Adrenal gland (tissue), 19 donors: ENCODE measurements at regions of chr12 and their contacts with region 1.

Region 1: GRCh38 chr12:27652174-27652763 is 44.0 kb upstream of the REP15 start:
- DNase-seq: peak; percentile 38 to 77 (median 76)
- H3K4me3 ChIP-seq: no peak overlapping the region
- H3K27ac ChIP-seq: no peak overlapping the region
- H3K4me1 ChIP-seq: no peaks in the 10 kb centered on the region
- H3K27me3 ChIP-seq: no peaks in the 10 kb centered on the region
- CTCF ChIP-seq: peak; percentile 79 to 95 (median 84)
- POLR2A ChIP-seq: no peak

Region 2: GRCh38 chr12:27424631-27425230 is 227.5 kb before region 1 on chr12:
- intact Hi-C with region 1: loop called in 1 of 2 experiments (anchors 10 kb)
- DNase-seq: peak in 6 of 7 donors; percentile 25 to 68 (median 32)
- H3K4me3 ChIP-seq: no peak overlapping the region
- H3K27ac ChIP-seq: no peak overlapping the region
- H3K4me1 ChIP-seq: no peaks in the 10 kb centered on the region
- H3K27me3 ChIP-seq: no peaks in the 10 kb centered on the region
- CTCF ChIP-seq: peak; percentile 47 to 67 (median 65)
- POLR2A ChIP-seq: no peak

Region 3: GRCh38 chr12:27434673-27435565 is 217.3 kb before region 1 on chr12:
- intact Hi-C with region 1: loop called in 1 of 2 experiments (anchors 10 kb)
- DNase-seq: peak in 4 of 7 donors; percentile 11 to 37 (median 26)
- H3K4me3 ChIP-seq: no peak overlapping the region
- H3K27ac ChIP-seq: no peak overlapping the region
- H3K4me1 ChIP-seq: no peaks in the 10 kb centered on the region
- H3K27me3 ChIP-seq: no peaks in the 10 kb centered on the region
- CTCF ChIP-seq: peak in 4 of 6 experiments; percentile 32 to 56 (median 51)
- POLR2A ChIP-seq: no peak